Kidney (tissue), 22 donors: ENCODE measurements at regions of chr1 and their contacts with region 1.

Region 1: DNA sequence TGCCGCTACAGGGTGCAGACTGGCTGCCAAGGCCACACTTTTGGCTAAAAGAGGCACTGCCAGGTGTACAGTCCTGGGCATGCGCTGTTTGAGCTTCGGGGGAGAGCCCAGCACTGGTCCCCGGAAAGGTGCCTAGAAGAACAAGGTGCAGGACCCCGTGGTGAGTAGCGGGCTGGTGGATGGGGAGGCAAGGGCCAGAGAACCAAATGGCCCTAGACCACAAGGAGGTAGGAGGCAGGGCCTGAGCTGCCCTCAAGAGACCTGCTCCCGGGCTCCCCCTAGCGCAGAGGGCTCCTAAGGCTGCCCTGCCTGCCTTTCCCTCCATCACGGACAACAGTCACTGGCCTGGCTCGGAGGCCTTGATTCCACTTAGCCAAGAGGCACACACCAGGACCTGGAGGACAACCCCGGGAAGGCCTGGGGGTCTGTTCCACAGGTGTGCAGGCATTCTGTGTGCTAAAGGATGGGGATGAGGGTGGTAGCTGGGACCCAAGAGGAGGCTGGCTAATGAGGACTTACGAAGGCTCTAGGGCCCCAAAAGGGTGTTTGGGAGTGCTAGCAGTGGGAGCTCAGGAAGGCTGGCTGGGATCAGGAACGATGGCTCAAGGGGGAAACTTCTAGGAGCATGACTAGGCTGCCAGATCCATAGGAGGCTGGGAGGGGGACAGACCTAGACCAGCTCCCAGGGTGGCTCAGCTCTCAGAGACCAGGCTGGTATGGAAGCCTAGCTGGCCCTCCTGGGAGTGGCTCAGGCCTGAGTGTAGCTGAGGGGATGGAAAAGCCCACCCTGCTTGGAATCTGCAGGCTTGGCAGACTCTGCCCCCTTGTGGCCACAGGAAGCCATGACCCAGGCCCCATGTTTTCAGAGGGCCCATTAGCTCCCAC is 742 bp downstream of the ARTN start:
- DNase-seq: peak; percentile 82 to 88 (median 83)
- H3K4me3 ChIP-seq: no peak overlapping the region
- H3K27ac ChIP-seq: no peak overlapping the region
- H3K4me1 ChIP-seq: peaks cover 0 to 33% (median 21%) of the 10 kb centered on the region in 3 donors
- H3K27me3 ChIP-seq: no peaks in the 10 kb centered on the region
- CTCF ChIP-seq: peak; percentile 87

Region 2: DNA sequence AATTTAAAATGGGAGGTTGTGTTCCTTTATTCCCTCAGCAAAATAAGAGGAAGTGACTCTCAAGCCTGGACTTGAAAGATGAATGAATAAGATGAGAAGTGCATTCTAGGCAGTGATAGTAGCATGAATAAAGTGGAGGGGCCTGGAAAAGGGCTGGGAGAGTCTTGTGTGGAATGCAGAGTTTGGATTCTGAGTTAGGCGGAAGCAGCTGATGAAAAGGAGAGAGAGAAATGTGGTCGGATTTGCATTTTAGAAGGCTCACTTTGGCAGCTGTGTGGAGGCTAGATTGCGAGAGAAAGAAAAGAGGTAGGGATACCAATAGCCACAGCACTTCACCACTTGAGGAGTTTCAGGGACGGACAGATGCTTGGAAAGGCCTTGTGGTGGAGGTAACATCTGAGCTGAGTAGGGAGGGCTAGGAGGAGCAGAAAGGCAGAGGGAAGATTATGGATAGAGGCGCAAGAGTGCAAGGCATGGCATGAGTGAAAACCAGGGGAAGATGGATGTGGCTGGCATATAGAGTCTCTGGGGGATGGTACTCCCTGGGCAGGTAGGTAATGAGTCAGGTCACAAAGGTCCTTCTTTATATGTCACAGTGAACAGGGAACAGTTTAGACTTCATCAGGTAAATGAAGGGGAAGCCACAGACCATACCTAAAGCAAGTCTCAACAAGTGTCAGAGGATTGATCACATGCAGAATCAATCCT is 167.4 kb before region 1 on chr1:
- intact Hi-C with region 1: loop called (anchors 5 kb)
- DNase-seq: peak in 1 of 5 donors; percentile 3
- H3K4me3 ChIP-seq: no peak overlapping the region
- H3K27ac ChIP-seq: no peak overlapping the region
- H3K4me1 ChIP-seq: no peaks in the 10 kb centered on the region
- H3K27me3 ChIP-seq: no peaks in the 10 kb centered on the region
- CTCF ChIP-seq: no peak